ENCODE measurements at regions of chr19 and their contacts with region 1.

Region 1: GRCh38 chr19:36850559-36851442 is at the start of gene ZNF345:
- DNase-seq: peak; percentile 84
- H3K4me3 Mint-ChIP-seq: no peak within 1 kb of the TSS
- H3K27ac Mint-ChIP-seq: no peak within 1 kb of the TSS
- H3K4me1 Mint-ChIP-seq: peaks cover 4% of the 10 kb centered on the region
- H3K27me3 Mint-ChIP-seq: no peaks in the 10 kb centered on the region
- total RNA-seq, gene ZNF345: 2.3 and 3.9 TPM in 2 replicates

Region 2: DNA sequence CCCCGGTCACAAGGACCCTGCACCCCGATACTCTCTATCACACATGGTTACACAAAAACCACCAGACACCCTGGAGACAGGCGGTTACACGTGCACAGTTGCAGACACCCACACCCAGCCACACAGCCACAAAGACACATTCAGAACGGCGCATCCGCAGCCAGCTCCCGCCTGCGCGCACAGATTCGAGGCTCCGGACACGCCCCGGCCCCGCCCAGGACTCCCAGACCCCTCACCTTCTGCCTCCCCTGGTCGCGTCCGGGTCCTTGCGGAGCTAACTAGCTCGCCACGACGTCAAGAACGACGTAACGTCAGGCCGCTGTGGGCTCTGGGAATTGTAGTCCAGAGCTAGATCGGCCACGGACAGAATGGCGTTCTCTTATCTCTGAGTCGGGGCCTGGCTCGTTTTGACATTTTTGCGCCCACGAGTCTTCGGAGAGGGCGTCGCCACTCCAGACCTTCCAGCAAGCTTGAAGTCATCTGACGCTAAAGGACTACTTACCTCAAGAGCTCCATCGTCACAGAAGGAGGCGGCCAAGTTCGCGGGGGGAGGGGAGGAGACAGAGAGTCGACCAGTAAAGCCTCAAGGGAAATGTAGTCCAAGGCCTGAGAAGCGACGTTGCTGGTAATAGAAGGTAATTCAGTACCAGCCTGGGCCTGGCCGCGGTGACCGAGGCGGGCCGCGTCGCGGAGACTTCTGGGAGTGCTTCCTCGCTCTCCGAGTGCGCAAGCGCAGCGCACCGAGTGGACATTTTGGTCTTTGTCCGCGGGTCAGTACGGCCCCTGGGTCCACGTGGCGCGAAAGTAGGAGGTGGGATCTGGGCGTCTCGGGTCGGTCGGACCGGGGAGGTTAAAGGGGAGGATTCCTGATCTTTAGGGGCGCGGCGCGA is 636.2 kb before region 1 on chr19 and contains the starts of genes ZNF146 and ZNF565:
- intact Hi-C with region 1: loop called (anchors 10 kb)
- DNase-seq: peak; percentile 95
- H3K4me3 Mint-ChIP-seq: no peak within 1 kb of the TSS
- H3K27ac Mint-ChIP-seq: no peak within 1 kb of the TSS
- H3K4me1 Mint-ChIP-seq: peaks cover 3% of the 10 kb centered on the region
- H3K27me3 Mint-ChIP-seq: no peaks in the 10 kb centered on the region
- total RNA-seq, gene ZNF146: 82.3 and 86.4 TPM in 2 replicates
- total RNA-seq, gene ZNF565: 1.5 and 2.4 TPM in 2 replicates

Region 3: DNA sequence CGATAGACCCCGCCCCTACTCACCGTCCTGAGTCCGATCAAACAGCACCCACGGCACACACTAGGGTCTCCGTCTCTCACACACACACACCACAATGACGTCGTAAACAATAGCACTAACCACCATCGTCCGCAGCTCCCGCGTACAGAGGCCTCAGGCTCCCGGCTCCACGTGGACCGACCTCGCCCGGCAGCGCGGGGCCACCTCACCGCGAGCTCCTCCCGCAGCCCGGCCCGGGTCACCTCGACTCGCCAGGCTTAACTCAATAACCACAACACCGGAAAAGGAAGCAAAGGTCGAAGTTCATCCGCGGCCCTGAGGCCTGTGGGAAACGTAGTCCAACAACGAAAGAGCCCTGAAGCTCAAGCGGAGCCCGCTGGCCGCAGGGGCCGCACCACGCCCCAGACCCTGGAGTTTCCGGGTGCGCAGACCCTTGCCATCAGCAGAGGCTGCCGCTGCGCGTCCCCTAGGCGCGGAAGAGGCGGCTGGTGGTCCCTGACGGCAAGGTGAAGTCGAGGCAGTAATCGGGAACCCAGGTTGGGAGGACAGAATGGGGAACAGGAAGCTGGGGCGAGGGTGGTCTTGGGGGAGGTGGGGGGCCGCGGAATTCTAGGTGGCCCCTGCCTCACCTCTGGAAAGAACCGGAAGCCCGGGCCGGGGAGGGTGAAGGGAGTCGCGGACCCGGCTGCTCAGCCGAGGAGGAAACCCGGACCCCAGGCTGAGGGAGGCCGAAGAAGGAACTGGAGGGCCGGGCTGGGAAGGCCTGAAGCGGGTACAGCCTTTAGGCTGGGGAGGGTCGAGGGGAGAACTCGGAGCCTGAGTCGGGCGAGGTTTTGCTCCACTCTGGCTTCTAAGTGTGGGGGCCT is 277.5 kb before region 1 on chr19 and contains the start of gene ZNF529:
- intact Hi-C with region 1: loop called (anchors 5 kb)
- DNase-seq: peak; percentile 85
- H3K4me3 Mint-ChIP-seq: peak within 1 kb of the TSS; percentile 93
- H3K27ac Mint-ChIP-seq: peak within 1 kb of the TSS; percentile 95
- H3K4me1 Mint-ChIP-seq: peaks cover 24% of the 10 kb centered on the region
- H3K27me3 Mint-ChIP-seq: no peaks in the 10 kb centered on the region
- total RNA-seq, gene ZNF529: 14.8 and 15.2 TPM in 2 replicates

Region 4: GRCh38 chr19:36797786-36798108 is 53.1 kb before region 1 on chr19:
- intact Hi-C with region 1: loop called (anchors 1 kb)
- DNase-seq: no peak
- H3K4me3 Mint-ChIP-seq: peak overlapping the region; percentile 79
- H3K27ac Mint-ChIP-seq: peak overlapping the region; percentile 16
- H3K4me1 Mint-ChIP-seq: peaks cover 3% of the 10 kb centered on the region
- H3K27me3 Mint-ChIP-seq: no peaks in the 10 kb centered on the region

Region 5: DNA sequence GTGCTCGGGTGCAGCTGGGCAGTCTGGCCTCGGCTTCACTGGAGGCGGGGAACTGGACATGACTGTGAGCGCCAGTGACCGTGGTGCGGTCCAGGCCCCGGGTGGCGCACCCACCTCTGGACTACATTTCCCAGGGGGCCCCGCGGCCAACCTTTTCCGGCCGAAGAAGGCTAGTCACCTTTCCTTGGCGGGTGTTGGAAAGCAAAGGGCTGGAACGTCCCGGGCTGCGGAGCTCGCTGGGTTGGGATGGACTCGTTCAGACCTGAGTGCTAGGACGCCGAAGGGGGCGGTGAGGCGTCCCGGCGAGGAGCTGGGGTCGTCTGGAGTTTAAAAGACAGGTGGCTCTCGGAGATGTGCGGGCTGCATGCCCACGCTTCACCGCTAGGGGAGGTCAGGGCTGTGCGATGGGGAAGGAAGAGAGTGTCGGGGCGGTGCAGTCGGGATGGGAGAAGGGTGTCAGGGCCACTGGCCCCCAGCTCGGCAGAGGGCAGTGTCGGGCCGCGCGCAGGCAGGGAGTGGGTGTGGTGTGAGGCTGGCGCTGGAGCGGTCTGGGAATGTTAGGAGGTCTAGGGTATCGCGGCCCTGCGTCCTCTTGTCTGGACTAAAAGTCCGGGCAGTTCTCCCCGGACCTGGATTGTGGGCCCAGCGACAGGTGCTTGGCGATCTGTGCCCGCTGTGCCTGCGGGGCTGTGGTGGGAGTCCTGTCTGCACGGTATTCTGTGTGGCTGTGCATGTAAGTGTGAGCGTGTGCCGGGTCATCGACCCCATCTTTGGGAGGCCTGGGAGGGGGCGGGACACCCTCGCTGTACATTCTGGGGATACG is 122.4 kb after region 1 on chr19:
- intact Hi-C with region 1: loop called (anchors 2 kb)
- DNase-seq: peak; percentile 58
- H3K4me3 Mint-ChIP-seq: peak overlapping the region; percentile 91
- H3K27ac Mint-ChIP-seq: peak overlapping the region; percentile 80
- H3K4me1 Mint-ChIP-seq: peaks cover 9% of the 10 kb centered on the region
- H3K27me3 Mint-ChIP-seq: no peaks in the 10 kb centered on the region

Region 6: DNA sequence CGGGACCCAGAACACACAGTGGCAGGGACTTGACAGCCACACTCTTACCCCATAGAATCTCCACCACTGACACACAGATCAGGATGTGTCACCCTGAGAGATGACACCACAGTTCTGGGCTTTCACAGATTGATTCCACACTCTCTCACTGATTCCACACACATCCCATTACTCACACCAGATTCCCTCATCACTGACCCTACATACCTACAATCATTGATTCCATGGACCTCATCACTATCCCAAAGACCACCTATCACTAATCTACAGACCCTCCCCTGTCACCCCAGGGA is 462.5 kb after region 1 on chr19:
- intact Hi-C with region 1: loop called (anchors 1 kb)
- DNase-seq: no peak
- H3K4me3 Mint-ChIP-seq: peak overlapping the region; percentile 27
- H3K27ac Mint-ChIP-seq: no peak overlapping the region
- H3K4me1 Mint-ChIP-seq: peaks cover 13% of the 10 kb centered on the region
- H3K27me3 Mint-ChIP-seq: no peaks in the 10 kb centered on the region

Measured in activated T-helper 2 cell treated with anti-CD3 and anti-CD28 coated beads, Interferon-gamma antibody, Interleukin-2, Interleukin-4, amounts not matched to agents 10 μg/mL and 5 μg/mL and 100 μg/mL, durations not matched to agents 14 hours and 24 hours and 36 hours (primary cell).